ENCODE measurements at regions of chr6 and their contacts with region 1.

Region 1: DNA sequence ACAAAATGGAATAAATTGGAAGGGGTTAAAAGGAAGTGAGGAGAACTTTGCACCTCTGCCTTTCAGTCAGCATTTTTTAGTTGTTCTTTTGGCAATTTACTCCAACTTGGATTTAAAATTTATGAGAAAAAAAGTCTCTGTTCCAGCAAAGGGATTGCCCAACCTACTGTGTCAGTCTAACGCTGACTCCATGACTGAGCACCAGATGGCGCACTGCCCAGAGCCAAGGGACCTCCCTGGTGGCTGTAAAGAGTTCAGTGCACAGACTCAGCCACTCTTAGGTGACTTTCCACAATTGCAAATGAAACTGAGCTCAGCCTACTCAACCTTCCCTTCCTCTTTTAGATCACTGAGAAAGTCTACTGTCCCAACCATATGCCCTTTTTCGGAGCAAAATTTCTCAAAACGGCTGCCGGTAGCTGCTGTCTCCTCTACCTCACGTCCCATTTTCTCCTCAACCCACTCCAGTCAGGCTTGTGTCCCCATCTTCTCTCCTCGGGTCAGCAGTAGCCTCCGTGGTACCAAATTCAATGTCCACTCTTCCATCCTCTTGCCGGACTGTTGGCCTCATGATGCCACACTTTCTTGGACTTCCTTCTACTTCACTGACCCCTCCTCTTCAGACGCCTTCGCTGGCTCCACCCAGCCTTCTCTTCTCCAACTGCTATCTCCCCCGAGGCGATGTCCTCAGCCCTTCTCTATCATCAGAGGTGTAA is 38.7 kb downstream of the GSTA2 start:
- DNase-seq: peak; percentile 56 to 89
- H3K4me3 ChIP-seq: no peak overlapping the region
- H3K4me1 ChIP-seq: peaks cover 3% of the 10 kb centered on the region; the same call in 1 of the 2 replicates
- H3K27me3 ChIP-seq: no peaks in the 10 kb centered on the region

Region 2: GRCh38 chr6:52801188-52801841 is 76.8 kb after region 1 on chr6:
- in situ Hi-C with region 1: loop called (anchors 10 kb)
- DNase-seq: no peak
- H3K4me3 ChIP-seq: no peak overlapping the region
- H3K4me1 ChIP-seq: no peaks in the 10 kb centered on the region
- H3K27me3 ChIP-seq: no peaks in the 10 kb centered on the region

Measured in HAP-1 (cell line).